ENCODE measurements at regions of chr6 and their contacts with region 1.

Region 1: GRCh38 chr6:33788694-33789549 is at the start of gene LEMD2:
- DNase-seq: peak; percentile 88 to 96 (median 91)
- ATAC-seq: peak; percentile 94
- H3K4me3 ChIP-seq: peak within 1 kb of the TSS; percentile 80
- H3K4me3 Mint-ChIP-seq: peak within 1 kb of the TSS; percentile 93 to 100 (median 98)
- H3K27ac ChIP-seq: peak within 1 kb of the TSS; percentile 92
- H3K27ac Mint-ChIP-seq: peak within 1 kb of the TSS; percentile 95 to 99 (median 97)
- H3K4me1 ChIP-seq: peaks cover 37 to 40% of the 10 kb centered on the region in 2 donors
- H3K4me1 Mint-ChIP-seq: peaks cover 40 to 55% (median 51%) of the 10 kb centered on the region in 7 donors
- H3K27me3 ChIP-seq: no peaks in the 10 kb centered on the region
- H3K27me3 Mint-ChIP-seq: peaks cover 0 to 25% (median 0%) of the 10 kb centered on the region in 5 donors
- total RNA-seq, gene LEMD2: 71.4 to 124 (median 118) TPM

Region 2: GRCh38 chr6:32666420-32667300 is 1122.3 kb before region 1 on chr6 and contains the start of gene HLA-DQB1:
- CTCF ChIA-PET with region 1: no interaction called
- POLR2A ChIA-PET with region 1: no interaction called
- intact Hi-C with region 1: no loop called
- DNase-seq: peak in 5 of 9 donors; percentile 49 to 67 (median 61)
- ATAC-seq: peak; percentile 90
- H3K4me3 ChIP-seq: peak within 1 kb of the TSS; percentile 63
- H3K4me3 Mint-ChIP-seq: peak within 1 kb of the TSS; percentile 45 to 88 (median 75)
- H3K27ac ChIP-seq: peak within 1 kb of the TSS; percentile 45
- H3K27ac Mint-ChIP-seq: peak within 1 kb of the TSS in 6 of 9 donors; percentile 47 to 86 (median 68)
- H3K4me1 ChIP-seq: peaks cover 11% of the 10 kb centered on the region in 2 donors
- H3K4me1 Mint-ChIP-seq: peaks cover 21 to 48% (median 40%) of the 10 kb centered on the region in 7 donors
- H3K27me3 ChIP-seq: no peaks in the 10 kb centered on the region
- H3K27me3 Mint-ChIP-seq: peaks cover 12 to 62% (median 24%) of the 10 kb centered on the region in 5 donors
- total RNA-seq, gene HLA-DQB1: 5.3 to 38.9 (median 9.4) TPM

Region 3: GRCh38 chr6:33417903-33418689 is 370.8 kb before region 1 on chr6 and contains the start of gene CUTA:
- CTCF ChIA-PET with region 1: no interaction called
- POLR2A ChIA-PET with region 1: no interaction called
- intact Hi-C with region 1: loop called in 1 of 2 experiments (anchors 1 kb)
- DNase-seq: peak; percentile 91 to 100 (median 99)
- ATAC-seq: peak; percentile 92
- H3K4me3 ChIP-seq: peak within 1 kb of the TSS; percentile 74
- H3K4me3 Mint-ChIP-seq: peak within 1 kb of the TSS; percentile 88 to 97 (median 94)
- H3K27ac ChIP-seq: peak within 1 kb of the TSS; percentile 94
- H3K27ac Mint-ChIP-seq: peak within 1 kb of the TSS; percentile 98 to 100 (median 99)
- H3K4me1 ChIP-seq: peaks cover 31 to 54% of the 10 kb centered on the region in 2 donors
- H3K4me1 Mint-ChIP-seq: peaks cover 60 to 89% (median 73%) of the 10 kb centered on the region in 7 donors
- H3K27me3 ChIP-seq: no peaks in the 10 kb centered on the region
- H3K27me3 Mint-ChIP-seq: no peaks in the 10 kb centered on the region
- total RNA-seq, gene CUTA: 148 to 235 (median 158) TPM

Region 4: DNA sequence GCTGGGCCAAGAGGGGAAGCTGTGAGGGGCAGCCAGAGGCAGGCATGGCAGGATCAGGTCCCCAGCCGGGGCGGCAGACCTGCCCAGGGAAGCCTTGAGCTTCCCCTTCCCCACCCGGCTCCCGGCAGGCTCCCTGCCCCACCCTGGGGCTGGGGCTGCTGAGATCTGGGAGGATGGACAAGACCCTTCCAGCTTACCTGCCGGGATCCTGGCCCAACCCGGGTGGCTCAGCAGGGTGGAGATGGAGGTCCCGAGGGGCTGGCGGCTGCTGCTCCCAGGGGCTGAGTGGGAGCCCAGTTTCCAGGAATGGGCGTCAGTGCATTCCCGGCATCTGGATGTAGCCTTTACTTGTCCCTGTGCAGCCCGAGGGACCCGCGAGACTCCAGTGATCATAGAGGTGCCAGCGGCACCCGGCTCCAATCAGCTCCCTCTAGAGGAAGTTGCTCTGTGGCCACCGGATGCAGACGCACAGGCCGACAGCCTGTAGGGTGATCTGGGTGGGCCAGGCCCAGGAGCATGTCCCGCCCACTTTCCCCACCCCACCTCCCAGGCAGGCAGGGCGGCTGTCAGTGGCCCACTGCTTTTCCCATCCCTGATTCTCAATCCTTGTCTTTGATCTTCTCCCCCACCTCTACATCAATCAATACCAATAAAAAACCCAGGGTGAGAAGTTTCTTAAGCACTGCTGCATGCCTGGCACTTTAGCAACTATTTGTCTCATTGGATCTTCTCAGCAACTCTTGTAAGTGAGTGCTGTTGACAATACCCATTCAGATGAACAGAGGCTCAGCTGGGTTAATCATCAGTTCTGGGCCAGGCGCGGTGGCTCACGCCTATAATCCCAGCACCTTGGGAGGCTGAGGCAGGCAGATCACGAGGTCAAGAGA is 208.9 kb before region 1 on chr6 and contains the start of gene BAK1:
- CTCF ChIA-PET with region 1: no interaction called
- POLR2A ChIA-PET with region 1: interaction called, 4 read pairs
- intact Hi-C with region 1: loop called in 1 of 2 experiments (anchors 5 kb)
- DNase-seq: peak; percentile 54 to 86 (median 78)
- ATAC-seq: peak; percentile 98
- H3K4me3 ChIP-seq: peak within 1 kb of the TSS; percentile 92
- H3K4me3 Mint-ChIP-seq: peak within 1 kb of the TSS; percentile 93 to 99 (median 96)
- H3K27ac ChIP-seq: peak within 1 kb of the TSS; percentile 83
- H3K27ac Mint-ChIP-seq: peak within 1 kb of the TSS; percentile 94 to 99 (median 97)
- H3K4me1 ChIP-seq: peaks cover 13 to 25% of the 10 kb centered on the region in 2 donors
- H3K4me1 Mint-ChIP-seq: peaks cover 26 to 43% (median 39%) of the 10 kb centered on the region in 7 donors
- H3K27me3 ChIP-seq: no peaks in the 10 kb centered on the region
- H3K27me3 Mint-ChIP-seq: no peaks in the 10 kb centered on the region
- total RNA-seq, gene BAK1: 16.9 to 78.8 (median 22.0) TPM

Region 5: DNA sequence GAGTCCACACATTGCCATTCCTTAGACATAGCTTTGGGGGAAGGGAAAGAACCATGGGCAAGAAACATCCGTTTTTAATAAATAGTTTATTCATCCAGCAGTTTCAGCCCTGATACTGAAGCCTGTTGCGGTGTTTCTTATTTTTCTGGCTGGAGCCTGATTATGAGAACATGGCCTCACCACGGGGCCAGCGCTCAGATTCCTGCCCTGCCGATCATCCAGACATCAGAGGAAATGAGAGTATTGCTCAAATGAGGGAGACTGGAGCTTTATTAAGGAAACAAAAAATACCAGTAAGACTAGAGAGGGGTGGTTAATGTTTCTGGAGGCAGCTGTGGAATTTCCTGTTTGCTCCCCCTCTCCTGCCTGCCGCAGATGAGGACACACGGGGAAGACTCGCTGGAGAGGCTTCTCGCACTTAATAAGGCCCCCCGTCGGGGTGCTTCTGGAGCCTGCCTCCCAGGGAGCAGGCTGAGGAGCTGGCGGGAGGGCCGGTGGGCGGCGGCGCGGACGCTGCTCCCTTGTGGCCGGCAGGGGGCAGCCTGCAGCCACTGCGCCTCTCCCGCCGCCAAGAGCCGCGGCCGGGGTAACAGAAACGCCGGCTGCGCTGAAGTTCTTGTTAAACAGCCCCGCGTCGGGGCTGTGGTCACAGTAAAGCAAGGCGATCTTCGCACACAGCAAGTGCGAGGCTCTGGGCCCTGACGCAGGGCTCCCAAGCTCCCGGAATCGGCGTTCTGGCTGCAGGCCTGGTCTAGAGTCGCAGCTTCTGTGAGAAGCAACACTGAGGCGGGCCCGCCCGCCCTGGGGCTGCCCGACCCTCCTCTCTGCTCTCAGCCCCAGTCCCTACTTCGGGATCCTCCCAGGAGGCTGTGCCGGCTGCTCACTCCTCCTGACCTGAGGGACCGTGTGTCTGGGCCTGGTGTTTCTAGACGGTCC is 17.5 kb before region 1 on chr6:
- CTCF ChIA-PET with region 1: interaction called, 5 read pairs
- POLR2A ChIA-PET with region 1: interaction called, 6 read pairs
- intact Hi-C with region 1: loop called (anchors 2 kb)
- DNase-seq: peak; percentile 39 to 72 (median 64)
- ATAC-seq: peak; percentile 85
- H3K4me3 ChIP-seq: no peak overlapping the region
- H3K4me3 Mint-ChIP-seq: no peak overlapping the region
- H3K27ac ChIP-seq: no peak overlapping the region
- H3K27ac Mint-ChIP-seq: peak overlapping the region in 6 of 9 donors; percentile 2 to 89 (median 68)
- H3K4me1 ChIP-seq: no peaks in the 10 kb centered on the region
- H3K4me1 Mint-ChIP-seq: peaks cover 0 to 23% (median 13%) of the 10 kb centered on the region in 7 donors
- H3K27me3 ChIP-seq: no peaks in the 10 kb centered on the region
- H3K27me3 Mint-ChIP-seq: peaks cover 0 to 11% (median 3%) of the 10 kb centered on the region in 5 donors

Region 6: DNA sequence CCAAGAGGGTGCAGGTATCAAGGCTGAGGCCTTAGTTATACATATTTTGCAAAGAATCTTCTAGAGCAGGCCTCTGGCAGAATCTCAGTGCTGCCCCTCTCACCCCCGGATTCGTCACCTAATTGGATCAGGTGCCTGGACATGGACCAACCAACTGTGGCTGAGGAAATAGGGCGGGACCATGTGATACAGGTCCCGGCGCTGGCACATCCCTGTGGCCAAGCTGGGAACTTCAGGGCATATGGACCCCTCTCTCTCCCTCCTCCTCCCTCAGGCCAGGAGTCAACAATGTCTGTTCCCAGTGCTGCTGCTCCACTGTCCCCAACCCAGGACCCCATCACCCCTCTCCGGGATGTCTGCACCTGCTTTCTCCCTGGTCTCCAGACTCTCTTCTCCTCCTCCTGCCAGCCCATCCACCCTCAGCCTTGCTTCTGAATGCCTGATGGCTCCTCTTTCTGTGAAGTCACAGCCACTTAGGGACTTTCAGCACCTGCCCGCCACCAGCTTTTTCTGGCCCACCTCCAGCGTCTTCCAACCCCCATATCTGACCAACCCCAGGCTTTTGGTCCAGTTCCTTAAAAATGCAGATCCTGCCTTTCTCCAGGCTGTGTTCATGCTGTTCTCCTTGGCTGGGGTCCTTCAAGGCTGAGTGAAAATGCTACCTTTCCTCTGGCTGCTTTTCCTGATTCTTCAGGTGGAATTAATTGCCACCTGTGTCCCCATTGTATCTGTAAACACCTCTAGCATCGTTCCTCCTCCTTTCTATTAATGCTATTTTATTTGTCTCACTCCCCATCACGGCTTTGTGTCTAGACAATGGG is 33.9 kb after region 1 on chr6:
- CTCF ChIA-PET with region 1: no interaction called
- POLR2A ChIA-PET with region 1: no interaction called
- intact Hi-C with region 1: no loop called
- DNase-seq: no peak
- ATAC-seq: no peak
- H3K4me3 ChIP-seq: no peak overlapping the region
- H3K4me3 Mint-ChIP-seq: no peak overlapping the region
- H3K27ac ChIP-seq: no peak overlapping the region
- H3K27ac Mint-ChIP-seq: peak overlapping the region in 1 of 9 donors; percentile 48
- H3K4me1 ChIP-seq: no peaks in the 10 kb centered on the region
- H3K4me1 Mint-ChIP-seq: peaks cover 0 to 17% (median 8%) of the 10 kb centered on the region in 7 donors
- H3K27me3 ChIP-seq: no peaks in the 10 kb centered on the region
- H3K27me3 Mint-ChIP-seq: peaks cover 0 to 18% (median 0%) of the 10 kb centered on the region in 5 donors

Region 7: DNA sequence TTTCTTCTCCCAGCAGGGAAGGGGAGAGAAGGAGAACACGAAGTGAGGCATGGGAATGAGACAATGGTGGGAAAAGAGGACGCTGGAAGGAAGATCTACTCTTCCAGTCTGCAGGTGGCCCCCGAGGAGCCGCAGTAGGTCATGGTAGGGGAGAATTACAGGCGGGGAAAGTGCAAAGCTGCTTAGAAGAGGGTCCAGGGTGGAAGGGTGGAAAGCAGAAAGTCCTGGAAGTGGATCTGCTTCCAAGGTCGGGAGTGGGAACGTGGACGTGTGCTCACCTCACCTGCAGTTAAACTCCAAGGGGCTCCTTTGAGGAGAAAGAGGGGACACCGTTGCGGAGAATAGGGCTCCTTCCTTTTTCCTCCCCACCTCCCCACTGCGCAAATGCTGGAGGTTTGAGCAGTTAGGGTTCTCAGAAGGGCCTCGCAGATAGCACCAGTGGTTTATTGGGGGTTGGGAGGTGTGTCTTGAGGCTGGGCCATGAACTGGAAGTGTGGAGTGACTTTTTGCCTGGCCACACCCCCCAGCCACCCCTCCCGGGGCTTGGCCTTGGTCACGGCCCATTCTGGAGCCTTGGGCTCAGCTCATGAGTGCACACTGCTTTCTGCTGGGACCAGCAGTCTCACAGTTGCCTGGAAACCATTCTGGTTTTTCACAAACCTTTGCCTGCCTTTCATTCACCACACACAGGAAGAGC is 115.3 kb after region 1 on chr6:
- CTCF ChIA-PET with region 1: interaction called, 3 read pairs
- POLR2A ChIA-PET with region 1: interaction called, 13 read pairs
- intact Hi-C with region 1: loop called (anchors 1 kb)
- DNase-seq: peak; percentile 36 to 83 (median 75)
- ATAC-seq: peak; percentile 85
- H3K4me3 ChIP-seq: peak overlapping the region; percentile 28
- H3K4me3 Mint-ChIP-seq: peak overlapping the region; percentile 67 to 85 (median 82)
- H3K27ac ChIP-seq: peak overlapping the region; percentile 77
- H3K27ac Mint-ChIP-seq: peak overlapping the region; percentile 84 to 97 (median 95)
- H3K4me1 ChIP-seq: peaks cover 55 to 66% of the 10 kb centered on the region in 2 donors
- H3K4me1 Mint-ChIP-seq: peaks cover 54 to 88% (median 80%) of the 10 kb centered on the region in 7 donors
- H3K27me3 ChIP-seq: no peaks in the 10 kb centered on the region
- H3K27me3 Mint-ChIP-seq: peaks cover 0 to 2% (median 0%) of the 10 kb centered on the region in 5 donors

Region 8: GRCh38 chr6:34106900-34107573 is 318.1 kb after region 1 on chr6:
- CTCF ChIA-PET with region 1: no interaction called
- POLR2A ChIA-PET with region 1: no interaction called
- intact Hi-C with region 1: no loop called
- DNase-seq: no peak
- ATAC-seq: no peak
- H3K4me3 ChIP-seq: no peak overlapping the region
- H3K4me3 Mint-ChIP-seq: no peak overlapping the region
- H3K27ac ChIP-seq: no peak overlapping the region
- H3K27ac Mint-ChIP-seq: peak overlapping the region in 1 of 9 donors; percentile 70
- H3K4me1 ChIP-seq: no peaks in the 10 kb centered on the region
- H3K4me1 Mint-ChIP-seq: no peaks in the 10 kb centered on the region
- H3K27me3 ChIP-seq: no peaks in the 10 kb centered on the region
- H3K27me3 Mint-ChIP-seq: peaks cover 2 to 22% (median 5%) of the 10 kb centered on the region in 5 donors

Region 9: DNA sequence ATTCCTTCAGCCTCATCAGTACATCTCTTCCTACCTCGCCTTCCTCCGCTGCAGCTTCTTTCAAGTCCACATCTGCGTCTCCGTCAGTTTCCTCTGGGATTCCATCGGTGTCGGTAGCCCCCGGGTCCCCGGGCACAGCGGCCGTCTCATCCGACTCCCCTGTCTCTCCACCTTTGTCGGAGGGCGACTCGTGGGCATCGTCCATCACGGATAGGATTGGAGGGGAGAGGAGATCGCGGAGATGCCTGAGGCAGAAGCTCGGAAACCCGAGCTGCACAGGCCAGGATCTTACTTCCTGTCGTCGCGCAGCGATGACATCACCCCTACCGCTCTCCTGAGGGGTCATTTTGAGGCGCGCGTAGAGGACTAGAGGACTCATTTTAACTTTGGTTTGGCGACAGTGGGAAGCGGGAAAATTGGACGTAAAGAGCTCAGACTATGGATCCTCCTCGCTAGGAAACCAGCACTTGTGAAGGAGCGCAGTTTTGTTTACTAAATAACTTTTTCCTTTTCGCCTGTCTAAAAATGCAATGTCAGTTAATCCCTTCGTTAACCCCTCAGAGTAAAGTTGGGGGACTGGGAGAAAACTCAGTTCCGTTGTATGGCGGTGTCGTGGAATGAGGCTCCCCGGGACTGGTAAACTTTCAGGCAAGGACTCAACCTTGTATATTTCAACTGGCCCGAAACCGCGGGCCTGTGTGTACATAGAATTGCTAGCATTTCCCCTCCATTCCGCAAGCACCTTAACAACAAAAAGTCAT is 1099.0 kb after region 1 on chr6 and contains the start of gene TAF11:
- CTCF ChIA-PET with region 1: no interaction called
- POLR2A ChIA-PET with region 1: no interaction called
- intact Hi-C with region 1: loop called in 1 of 2 experiments (anchors 2 kb)
- DNase-seq: peak; percentile 73 to 91 (median 88)
- ATAC-seq: peak; percentile 80
- H3K4me3 ChIP-seq: peak within 1 kb of the TSS; percentile 94
- H3K4me3 Mint-ChIP-seq: peak within 1 kb of the TSS; percentile 92 to 100 (median 100)
- H3K27ac ChIP-seq: peak within 1 kb of the TSS; percentile 95
- H3K27ac Mint-ChIP-seq: peak within 1 kb of the TSS; percentile 99 to 100 (median 100)
- H3K4me1 ChIP-seq: peaks cover 15 to 18% of the 10 kb centered on the region in 2 donors
- H3K4me1 Mint-ChIP-seq: peaks cover 41 to 71% (median 58%) of the 10 kb centered on the region in 7 donors
- H3K27me3 ChIP-seq: no peaks in the 10 kb centered on the region
- H3K27me3 Mint-ChIP-seq: peaks cover 0 to 16% (median 0%) of the 10 kb centered on the region in 5 donors
- total RNA-seq, gene TAF11: 25.4 to 35.1 (median 29.4) TPM

Measured in naive thymus-derived CD4-positive, alpha-beta T cell (primary cell).